Esophagus squamous epithelium (tissue), 5 donors: ENCODE measurements at regions of chr19 and their contacts with region 1.

Region 1: DNA sequence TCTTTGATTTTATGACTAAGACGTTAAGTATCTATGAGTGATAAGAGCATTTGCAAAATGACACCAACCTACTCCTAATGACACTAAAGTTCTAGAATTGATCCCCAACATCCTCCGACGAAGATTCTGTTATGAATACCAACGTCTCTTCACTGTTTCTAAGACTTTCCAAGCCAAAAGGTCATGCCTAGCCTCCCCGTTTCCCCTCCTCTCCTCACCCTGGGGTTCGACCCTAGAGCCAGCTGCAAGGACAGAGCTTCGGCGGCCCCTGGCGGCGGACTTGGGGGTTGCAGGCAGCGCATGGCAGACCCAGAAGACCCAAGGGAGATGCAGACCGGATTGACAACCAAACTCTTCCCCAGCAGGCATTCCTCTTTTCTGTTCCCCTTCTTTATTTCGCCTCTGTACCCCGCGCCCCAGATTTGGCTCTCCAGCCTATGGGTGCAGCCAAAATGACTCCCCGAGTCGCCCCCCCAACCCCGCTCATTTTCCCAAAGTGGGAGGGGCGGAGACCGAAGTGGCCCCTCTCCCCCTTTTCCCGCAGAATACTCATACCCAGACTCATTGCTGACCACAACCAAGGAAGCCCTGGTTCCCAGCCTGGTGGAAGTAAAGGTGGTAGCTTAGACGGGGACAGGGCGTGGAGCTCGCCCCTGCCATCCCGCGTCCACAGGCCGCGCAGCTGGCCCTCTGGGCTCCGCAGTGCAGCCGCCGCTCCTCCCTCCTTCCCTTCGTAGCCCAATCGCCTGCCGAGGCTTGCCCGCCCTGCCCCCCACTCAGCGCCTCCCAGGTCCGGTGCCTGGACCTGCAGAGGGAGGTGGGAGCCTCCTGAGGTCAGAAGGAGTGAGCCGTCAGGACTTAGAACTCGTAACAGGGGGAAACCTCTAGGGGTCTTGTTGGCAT is 4.1 kb upstream of the EML2 start:
- DNase-seq: peak; percentile 29
- H3K4me3 ChIP-seq: peak overlapping the region in 1 of 4 donors; percentile 37
- H3K27ac ChIP-seq: peak overlapping the region in 3 of 4 donors; percentile 86 to 91 (median 90)
- H3K4me1 ChIP-seq: peaks cover 29 to 71% (median 45%) of the 10 kb centered on the region in 3 donors
- H3K27me3 ChIP-seq: peaks cover 0 to 39% (median 6%) of the 10 kb centered on the region in 4 donors
- CTCF ChIP-seq: peak; percentile 94 to 99 (median 98)
- POLR2A ChIP-seq: no peak

Region 2: DNA sequence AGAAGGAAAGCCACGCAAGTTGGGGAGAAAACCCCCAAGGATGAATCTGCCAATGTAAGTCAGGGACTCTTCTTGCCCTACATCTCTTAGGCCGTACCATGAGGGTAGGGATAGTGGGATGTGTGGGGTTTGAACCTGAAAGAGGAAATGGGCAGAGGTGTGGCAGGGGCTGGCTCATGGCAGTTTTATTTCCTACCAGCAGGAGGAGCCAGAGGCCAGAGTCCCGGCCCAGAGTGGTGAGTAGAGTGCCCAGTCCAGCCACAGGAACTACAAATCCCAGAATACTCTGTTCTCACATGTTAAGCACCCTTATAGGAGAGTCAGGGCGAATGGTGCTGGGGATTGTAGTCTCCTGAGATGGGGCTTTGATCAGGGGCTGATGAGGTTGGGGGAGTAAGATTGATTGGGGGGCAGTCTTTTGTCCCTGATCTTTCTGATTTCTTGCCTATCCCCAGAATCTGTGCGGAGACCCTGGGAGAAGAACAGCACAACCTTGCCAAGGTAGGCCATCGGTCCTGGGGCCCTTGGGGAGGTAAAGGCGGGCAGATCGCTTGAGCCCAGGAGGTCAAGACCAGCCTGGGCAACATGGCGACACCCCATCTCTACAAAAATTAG is 119.5 kb before region 1 on chr19:
- intact Hi-C with region 1: loop called (anchors 10 kb)
- DNase-seq: peak; percentile 34
- H3K4me3 ChIP-seq: no peak overlapping the region
- H3K27ac ChIP-seq: peak overlapping the region in 3 of 4 donors; percentile 22 to 59 (median 43)
- H3K4me1 ChIP-seq: peaks cover 12 to 45% (median 20%) of the 10 kb centered on the region in 3 donors
- H3K27me3 ChIP-seq: no peaks in the 10 kb centered on the region
- CTCF ChIP-seq: peak; percentile 96 to 98 (median 97)
- POLR2A ChIP-seq: no peak

Region 3: DNA sequence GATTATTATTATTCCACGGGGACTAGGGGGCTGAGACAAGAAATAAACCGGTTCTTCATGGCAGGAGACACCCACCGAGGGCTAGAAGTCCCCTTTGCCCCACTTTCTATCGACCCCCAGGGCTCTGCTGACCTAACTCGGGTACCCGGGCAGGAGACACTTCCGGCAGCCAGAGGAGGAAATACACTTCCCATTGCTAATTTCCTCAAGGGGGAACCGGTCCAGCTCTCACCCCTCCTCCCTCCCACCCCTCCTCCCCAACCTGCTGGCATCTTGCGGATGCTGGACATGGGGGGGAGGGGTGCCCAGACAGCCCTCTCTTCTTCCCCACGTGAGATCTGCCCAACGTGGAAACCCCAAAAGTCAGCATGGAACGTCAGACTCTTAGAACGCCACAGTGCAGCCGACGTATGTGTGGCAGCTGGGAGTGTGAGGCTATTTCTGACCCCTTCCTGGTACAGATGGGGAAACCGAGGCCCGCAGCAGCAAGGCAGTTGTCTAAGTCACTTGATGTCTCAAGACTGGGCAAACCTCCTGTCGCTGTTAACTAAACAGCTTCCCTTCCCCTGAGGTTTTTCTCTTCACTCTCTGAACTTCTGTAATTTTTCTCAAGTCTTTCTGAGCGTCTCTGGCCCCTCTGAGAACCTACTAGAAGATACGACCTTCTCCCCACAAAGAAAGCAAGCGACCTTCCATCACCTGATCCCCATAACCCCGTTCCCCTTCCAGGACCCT is 44.8 kb before region 1 on chr19:
- intact Hi-C with region 1: loop called (anchors 5 kb)
- DNase-seq: no peak
- H3K4me3 ChIP-seq: peak overlapping the region in 2 of 4 donors; percentile 19 to 29
- H3K27ac ChIP-seq: peak overlapping the region in 3 of 4 donors; percentile 48 to 66 (median 63)
- H3K4me1 ChIP-seq: peaks cover 4 to 50% (median 18%) of the 10 kb centered on the region in 3 donors
- H3K27me3 ChIP-seq: peaks cover 6 to 99% (median 34%) of the 10 kb centered on the region in 4 donors
- CTCF ChIP-seq: no peak
- POLR2A ChIP-seq: no peak

Region 4: DNA sequence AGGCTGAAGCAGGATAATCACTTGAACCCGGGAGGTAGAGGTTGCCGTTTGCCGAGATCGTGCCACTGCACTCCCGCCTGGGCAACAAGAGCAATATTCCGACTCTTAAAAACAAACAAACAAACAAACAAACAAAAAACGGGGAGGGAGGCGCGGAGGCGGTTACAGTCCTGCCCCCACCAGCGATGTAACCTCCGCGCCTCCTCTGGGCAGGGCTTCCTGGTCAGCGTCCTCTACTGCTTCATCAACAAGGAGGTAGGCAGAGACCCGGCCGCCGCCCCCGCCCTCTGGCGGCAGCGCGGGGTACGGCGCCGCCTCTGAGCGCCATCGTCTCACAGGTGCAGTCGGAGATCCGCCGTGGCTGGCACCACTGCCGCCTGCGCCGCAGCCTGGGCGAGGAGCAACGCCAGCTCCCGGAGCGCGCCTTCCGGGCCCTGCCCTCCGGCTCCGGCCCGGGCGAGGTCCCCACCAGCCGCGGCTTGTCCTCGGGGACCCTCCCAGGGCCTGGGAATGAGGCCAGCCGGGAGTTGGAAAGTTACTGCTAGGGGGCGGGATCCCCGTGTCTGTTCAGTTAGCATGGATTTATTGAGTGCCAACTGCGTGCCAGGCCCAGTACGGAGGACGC is 38.2 kb after region 1 on chr19:
- intact Hi-C with region 1: no loop called
- DNase-seq: peak; percentile 35
- H3K4me3 ChIP-seq: peak overlapping the region; percentile 3 to 61 (median 38)
- H3K27ac ChIP-seq: peak overlapping the region; percentile 78 to 85 (median 84)
- H3K4me1 ChIP-seq: peaks cover 15 to 38% (median 22%) of the 10 kb centered on the region in 3 donors
- H3K27me3 ChIP-seq: peaks cover 0 to 38% (median 0%) of the 10 kb centered on the region in 4 donors
- CTCF ChIP-seq: peak; percentile 93 to 99 (median 99)
- POLR2A ChIP-seq: peak in 1 of 4 donors; percentile 32

Region 5: GRCh38 chr19:45739498-45740439 is 96.5 kb after region 1 on chr19:
- intact Hi-C with region 1: no loop called
- DNase-seq: no peak
- H3K4me3 ChIP-seq: no peak overlapping the region
- H3K27ac ChIP-seq: no peak overlapping the region
- H3K4me1 ChIP-seq: no peaks in the 10 kb centered on the region
- H3K27me3 ChIP-seq: peaks cover 0 to 11% (median 0%) of the 10 kb centered on the region in 4 donors
- CTCF ChIP-seq: no peak
- POLR2A ChIP-seq: no peak